ENCODE measurements at regions of chr14 and their contacts with region 1.

Region 1: GRCh38 chr14:106738075-106738474 is 1211.7 kb downstream of the TMEM121 start:
- DNase-seq: peak in 5 of 14 experiments; percentile 36 to 70 (median 40)
- ATAC-seq: no peak
- H3K4me3 ChIP-seq: no peak overlapping the region
- H3K4me3 Mint-ChIP-seq: no peak overlapping the region
- H3K27ac ChIP-seq: no peak overlapping the region
- H3K27ac Mint-ChIP-seq: no peak overlapping the region
- H3K4me1 ChIP-seq: peaks cover 35% of the 10 kb centered on the region
- H3K4me1 Mint-ChIP-seq: peaks cover 17% of the 10 kb centered on the region
- H3K27me3 ChIP-seq: no peaks in the 10 kb centered on the region
- H3K27me3 Mint-ChIP-seq: no peaks in the 10 kb centered on the region
- CTCF ChIP-seq: no peak

Region 2: DNA sequence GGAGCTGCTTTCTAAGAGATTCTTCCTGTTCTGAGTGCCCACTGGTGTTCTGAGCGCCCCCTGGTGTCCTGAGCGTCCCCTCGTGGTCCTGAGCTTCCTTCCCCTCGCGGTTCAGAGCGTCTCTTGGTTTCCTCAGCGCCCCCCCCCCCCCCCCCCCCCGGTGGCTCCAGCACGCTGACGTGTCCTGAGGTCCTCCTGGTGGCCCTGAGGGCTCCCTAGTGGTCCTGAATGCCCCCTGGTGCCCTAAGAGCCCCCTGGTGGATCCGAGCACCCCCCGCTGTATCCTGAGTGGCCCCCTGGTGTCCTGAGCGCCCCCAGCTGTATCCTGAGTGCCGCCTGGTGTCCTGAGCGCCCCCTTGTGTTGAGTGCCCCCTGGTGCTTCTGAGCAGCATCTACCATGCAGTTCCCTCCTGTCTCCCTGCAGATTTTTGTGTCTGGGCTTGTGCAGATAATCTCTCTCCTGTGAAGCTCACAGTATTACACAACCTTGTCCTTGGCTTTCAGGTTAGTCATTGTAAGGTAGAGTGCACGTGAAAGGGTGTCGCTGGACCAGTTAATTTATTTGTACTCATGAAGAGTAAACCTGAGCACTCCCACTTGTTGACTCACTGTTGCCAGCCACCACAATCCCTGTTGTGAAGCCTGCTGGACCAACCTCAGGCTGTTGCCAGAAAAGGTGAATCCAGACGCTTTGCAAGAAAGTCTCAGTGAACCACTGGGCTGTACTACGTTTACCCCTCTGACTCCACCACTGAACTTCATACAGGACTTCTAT is 43.3 kb before region 1 on chr14:
- CTCF ChIA-PET with region 1: no interaction called
- POLR2A ChIA-PET with region 1: no interaction called
- intact Hi-C with region 1: loop called in 1 of 2 experiments (anchors 2 kb)
- DNase-seq: peak in 13 of 14 experiments; percentile 36 to 85 (median 61)
- ATAC-seq: peak; percentile 72
- H3K4me3 ChIP-seq: peak overlapping the region; percentile 18
- H3K4me3 Mint-ChIP-seq: peak overlapping the region; percentile 56
- H3K27ac ChIP-seq: no peak overlapping the region
- H3K27ac Mint-ChIP-seq: no peak overlapping the region
- H3K4me1 ChIP-seq: peaks cover 20% of the 10 kb centered on the region
- H3K4me1 Mint-ChIP-seq: peaks cover 27% of the 10 kb centered on the region
- H3K27me3 ChIP-seq: no peaks in the 10 kb centered on the region
- H3K27me3 Mint-ChIP-seq: no peaks in the 10 kb centered on the region
- CTCF ChIP-seq: peak; percentile 15

Region 3: GRCh38 chr14:106776395-106776983 is 38.4 kb after region 1 on chr14:
- CTCF ChIA-PET with region 1: no interaction called
- POLR2A ChIA-PET with region 1: no interaction called
- intact Hi-C with region 1: no loop called
- DNase-seq: no peak
- ATAC-seq: no peak
- H3K4me3 ChIP-seq: no peak overlapping the region
- H3K4me3 Mint-ChIP-seq: no peak overlapping the region
- H3K27ac ChIP-seq: no peak overlapping the region
- H3K27ac Mint-ChIP-seq: no peak overlapping the region
- H3K4me1 ChIP-seq: peaks cover 9% of the 10 kb centered on the region
- H3K4me1 Mint-ChIP-seq: peaks cover 11% of the 10 kb centered on the region
- H3K27me3 ChIP-seq: no peaks in the 10 kb centered on the region
- H3K27me3 Mint-ChIP-seq: no peaks in the 10 kb centered on the region
- CTCF ChIP-seq: no peak

Region 4: GRCh38 chr14:106802423-106803364 is 64.6 kb after region 1 on chr14:
- CTCF ChIA-PET with region 1: no interaction called
- POLR2A ChIA-PET with region 1: no interaction called
- intact Hi-C with region 1: no loop called
- DNase-seq: peak in 1 of 14 experiments; percentile 15
- ATAC-seq: no peak
- H3K4me3 ChIP-seq: no peak overlapping the region
- H3K4me3 Mint-ChIP-seq: no peak overlapping the region
- H3K27ac ChIP-seq: no peak overlapping the region
- H3K27ac Mint-ChIP-seq: no peak overlapping the region
- H3K4me1 ChIP-seq: no peaks in the 10 kb centered on the region
- H3K4me1 Mint-ChIP-seq: no peaks in the 10 kb centered on the region
- H3K27me3 ChIP-seq: peaks cover 8 to 24% of the 10 kb centered on the region in 2 experiments
- H3K27me3 Mint-ChIP-seq: peaks cover 57% of the 10 kb centered on the region
- CTCF ChIP-seq: no peak